Calu3 (cell line): ENCODE measurements at regions of chr17 and their contacts with region 1.

Region 1: DNA sequence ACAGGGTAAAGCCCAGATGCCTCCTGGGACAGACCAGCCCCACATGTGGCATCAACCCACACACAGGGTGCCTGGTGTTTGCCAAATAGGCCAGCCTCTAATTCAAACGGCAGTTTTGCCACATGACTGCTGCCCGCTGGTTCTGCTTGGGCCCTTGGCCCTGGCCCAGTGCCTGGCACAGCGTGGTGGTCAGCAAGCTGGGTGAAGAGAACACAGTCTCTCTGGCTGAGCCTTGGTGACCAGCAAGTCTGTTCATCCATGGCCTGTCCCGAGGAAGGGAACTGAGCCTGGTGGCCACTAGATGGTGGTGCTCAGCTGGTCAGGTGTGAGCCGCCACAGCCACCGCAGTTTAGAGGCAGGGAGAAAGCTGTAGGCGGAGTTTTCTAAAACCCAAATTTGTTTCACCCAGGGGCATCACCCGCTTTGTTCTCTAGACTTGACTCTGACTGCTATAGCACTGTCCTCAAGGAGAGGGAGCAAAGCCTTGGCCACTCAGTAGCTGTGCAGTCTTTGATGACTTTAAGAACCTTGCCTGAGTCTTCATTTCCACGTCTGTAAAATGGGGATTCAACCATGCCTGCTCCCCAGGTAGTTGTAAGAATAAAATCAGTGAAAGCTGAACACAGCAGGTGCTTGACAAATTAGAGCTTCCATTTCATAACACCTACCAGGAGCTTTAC is 4.7 kb upstream of the GFAP start:
- DNase-seq: peak; percentile 90
- H3K4me3 Mint-ChIP-seq: no peak overlapping the region
- H3K27ac Mint-ChIP-seq: no peak overlapping the region
- H3K4me1 Mint-ChIP-seq: peaks cover 25% of the 10 kb centered on the region
- H3K27me3 Mint-ChIP-seq: peaks cover 44% of the 10 kb centered on the region
- CTCF ChIP-seq: peak; percentile 85

Region 2: DNA sequence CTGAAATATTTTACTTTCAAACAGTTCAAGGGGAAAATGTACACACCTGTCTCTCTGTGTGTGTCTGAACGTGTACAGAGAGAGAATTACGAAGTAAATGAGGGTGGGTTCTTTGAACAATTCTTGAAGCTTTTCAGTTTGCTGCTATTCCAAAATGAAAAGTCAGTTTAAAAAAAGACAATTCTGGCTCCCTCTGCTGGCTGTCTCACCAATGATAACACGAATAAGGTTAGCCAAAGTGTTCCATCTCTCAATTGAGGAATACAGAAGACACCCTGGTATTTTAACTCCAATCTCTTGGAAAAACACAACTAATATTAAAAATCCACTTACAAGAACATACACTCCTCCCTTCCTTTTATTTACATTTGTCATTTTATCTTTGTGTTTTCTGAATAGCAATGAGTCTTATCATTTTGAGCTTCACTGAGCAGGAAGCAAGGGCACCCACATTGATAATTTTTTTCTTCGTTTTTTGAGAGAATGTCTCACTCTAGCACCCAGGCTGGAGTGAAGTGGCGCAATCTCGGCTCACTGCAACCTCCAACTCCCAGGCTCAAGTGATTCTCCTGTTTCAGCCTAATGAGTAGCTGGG is 41.3 kb before region 1 on chr17:
- CTCF ChIA-PET with region 1: no interaction called
- intact Hi-C with region 1: no loop called
- DNase-seq: peak; percentile 52
- H3K4me3 Mint-ChIP-seq: no peak overlapping the region
- H3K27ac Mint-ChIP-seq: no peak overlapping the region
- H3K4me1 Mint-ChIP-seq: no peaks in the 10 kb centered on the region
- H3K27me3 Mint-ChIP-seq: no peaks in the 10 kb centered on the region
- CTCF ChIP-seq: peak; percentile 82

Region 3: DNA sequence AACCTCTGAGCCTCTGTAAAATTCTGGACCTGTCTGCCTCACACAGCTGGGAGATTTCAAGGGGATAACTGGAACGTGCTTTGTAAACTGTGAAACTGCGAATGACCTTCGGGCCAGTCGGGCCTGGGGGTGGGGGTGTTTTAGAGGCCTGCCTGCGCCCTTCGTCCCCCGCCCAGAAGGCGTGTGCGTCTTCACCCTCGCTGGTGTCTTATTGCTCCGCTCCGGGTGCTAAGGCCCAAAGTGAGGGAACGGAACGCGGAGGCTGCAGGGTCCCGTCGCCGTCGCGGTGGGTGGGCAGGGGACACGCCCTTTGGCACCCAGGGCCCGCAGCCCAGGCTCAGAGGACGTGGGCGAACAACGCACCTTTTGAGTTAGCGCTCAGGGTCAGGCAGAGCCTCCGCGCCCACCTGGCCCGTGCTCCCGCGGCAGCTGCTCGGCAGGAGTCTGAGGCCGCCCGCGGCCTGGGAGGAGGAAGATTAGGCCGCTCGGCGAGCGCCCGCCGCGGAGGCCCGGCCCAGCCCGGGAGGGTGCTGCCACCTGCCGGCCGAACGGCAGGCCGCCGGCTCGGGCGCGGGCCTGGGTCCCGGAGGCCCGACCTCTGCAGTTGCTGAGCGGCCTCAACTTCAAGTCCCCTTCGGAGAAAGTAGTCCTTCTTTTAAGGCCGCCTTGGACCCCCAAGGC is 101.7 kb after region 1 on chr17:
- CTCF ChIA-PET with region 1: interaction called, 78 read pairs
- intact Hi-C with region 1: loop called (anchors 1 kb)
- DNase-seq: peak; percentile 91
- H3K4me3 Mint-ChIP-seq: peak overlapping the region; percentile 64
- H3K27ac Mint-ChIP-seq: peak overlapping the region; percentile 53
- H3K4me1 Mint-ChIP-seq: peaks cover 17% of the 10 kb centered on the region
- H3K27me3 Mint-ChIP-seq: peaks cover 41% of the 10 kb centered on the region
- CTCF ChIP-seq: peak; percentile 98

Region 4: GRCh38 chr17:45098869-45099616 is 179.0 kb after region 1 on chr17:
- CTCF ChIA-PET with region 1: no interaction called
- intact Hi-C with region 1: loop called (anchors 5 kb)
- DNase-seq: peak; percentile 95
- H3K4me3 Mint-ChIP-seq: no peak overlapping the region
- H3K27ac Mint-ChIP-seq: peak overlapping the region; percentile 8
- H3K4me1 Mint-ChIP-seq: peaks cover 6% of the 10 kb centered on the region
- H3K27me3 Mint-ChIP-seq: no peaks in the 10 kb centered on the region
- CTCF ChIP-seq: peak; percentile 98